Stomach (tissue), 19 donors: ENCODE measurements at regions of chr2 and their contacts with region 1.

Region 1: GRCh38 chr2:218301176-218301819 is 9.0 kb upstream of the TMBIM1 start:
- DNase-seq: peak; percentile 93 to 96
- H3K4me3 ChIP-seq: no peak overlapping the region
- H3K27ac ChIP-seq: peak overlapping the region in 3 of 5 donors; percentile 23 to 69 (median 52)
- H3K4me1 ChIP-seq: peaks cover 8 to 31% (median 22%) of the 10 kb centered on the region in 4 donors
- H3K27me3 ChIP-seq: no peaks in the 10 kb centered on the region
- CTCF ChIP-seq: peak in 6 of 7 experiments; percentile 87 to 99 (median 98)
- EP300 ChIP-seq: no peak
- POLR2A ChIP-seq: no peak

Region 2: GRCh38 chr2:218033590-218034496 is 267.5 kb before region 1 on chr2:
- intact Hi-C with region 1: no loop called
- DNase-seq: peak in 1 of 2 donors; percentile 52
- H3K4me3 ChIP-seq: peak overlapping the region in 2 of 4 donors; percentile 19 to 40
- H3K27ac ChIP-seq: no peak overlapping the region
- H3K4me1 ChIP-seq: peaks cover 14 to 33% (median 25%) of the 10 kb centered on the region in 4 donors
- H3K27me3 ChIP-seq: peaks cover 0 to 11% (median 3%) of the 10 kb centered on the region in 3 donors
- CTCF ChIP-seq: no peak
- EP300 ChIP-seq: no peak
- POLR2A ChIP-seq: no peak

Region 3: DNA sequence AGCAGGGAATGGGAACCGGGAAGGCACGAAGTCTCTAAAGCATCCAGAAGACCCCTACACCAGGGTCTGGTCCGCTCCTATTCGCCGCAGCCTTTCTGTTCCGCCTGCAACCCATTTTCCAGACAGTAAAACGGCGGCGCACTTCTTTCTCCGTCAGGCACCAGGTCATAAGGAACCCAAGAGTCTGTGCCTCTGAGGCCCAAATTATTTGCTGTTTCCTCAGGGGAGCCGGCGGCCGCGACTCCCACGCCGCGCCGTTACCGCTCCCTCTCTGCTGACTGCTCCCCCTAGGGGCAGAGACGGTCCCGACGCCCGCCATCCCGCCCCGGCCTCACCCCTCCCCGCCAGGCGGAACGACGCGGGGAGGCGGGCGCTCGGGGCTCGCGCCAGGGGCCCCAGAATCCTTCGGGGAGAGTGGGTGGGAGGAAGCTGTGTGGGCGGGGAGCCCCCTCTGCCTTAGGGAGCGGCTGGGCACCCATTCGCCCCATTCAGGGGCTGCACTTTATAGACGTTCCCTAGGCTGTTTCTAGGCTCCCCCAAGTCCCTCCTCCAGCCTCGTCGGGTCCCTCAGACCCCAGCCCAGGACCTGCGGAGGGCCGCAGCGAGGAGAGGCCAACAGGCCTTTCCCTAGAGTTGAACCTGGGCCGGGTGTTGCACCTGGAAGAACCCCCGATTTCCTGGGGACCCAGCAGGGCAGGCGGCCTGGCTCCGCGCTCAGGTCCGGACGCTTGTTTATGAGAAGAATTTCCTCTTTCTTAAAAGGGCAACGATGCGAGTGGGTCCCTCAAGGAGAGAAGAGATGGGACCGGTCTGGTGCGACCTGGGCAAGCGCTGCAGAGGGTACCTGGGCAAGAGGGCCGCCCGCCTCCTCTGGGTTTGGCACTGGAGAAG is 94.7 kb after region 1 on chr2:
- intact Hi-C with region 1: loop called (anchors 10 kb)
- DNase-seq: peak; percentile 95 to 98
- H3K4me3 ChIP-seq: peak overlapping the region; percentile 74 to 97 (median 94)
- H3K27ac ChIP-seq: peak overlapping the region; percentile 98 to 100 (median 100)
- H3K4me1 ChIP-seq: peaks cover 25 to 53% (median 41%) of the 10 kb centered on the region in 4 donors
- H3K27me3 ChIP-seq: no peaks in the 10 kb centered on the region
- CTCF ChIP-seq: peak in 6 of 7 experiments; percentile 48 to 97 (median 93)
- EP300 ChIP-seq: no peak
- POLR2A ChIP-seq: peak in 1 of 4 donors; percentile 28